PC-3 (cell line): ENCODE measurements at regions of chr2 and their contacts with region 1.

Region 1: GRCh38 chr2:19911799-19912509 is 10.2 kb upstream of the TTC32 start:
- DNase-seq: peak; percentile 99
- ATAC-seq: peak; percentile 97
- H3K4me3 ChIP-seq: 0 out of 2 replicates have a peak overlapping the region, but pooled peaks have one; percentile 6
- H3K27ac ChIP-seq: peak overlapping the region; percentile 71
- H3K4me1 ChIP-seq: peaks cover 32% of the 10 kb centered on the region
- H3K27me3 ChIP-seq: no peaks in the 10 kb centered on the region
- CTCF ChIP-seq: no peak

Region 2: GRCh38 chr2:18731666-18732065 is 1180.3 kb before region 1 on chr2:
- CTCF ChIA-PET with region 1: no interaction called
- POLR2A ChIA-PET with region 1: no interaction called
- intact Hi-C with region 1: no loop called
- DNase-seq: no peak
- ATAC-seq: no peak
- H3K4me3 ChIP-seq: no peak overlapping the region
- H3K27ac ChIP-seq: no peak overlapping the region
- H3K4me1 ChIP-seq: no peaks in the 10 kb centered on the region
- H3K27me3 ChIP-seq: no peaks in the 10 kb centered on the region
- CTCF ChIP-seq: no peak

Region 3: DNA sequence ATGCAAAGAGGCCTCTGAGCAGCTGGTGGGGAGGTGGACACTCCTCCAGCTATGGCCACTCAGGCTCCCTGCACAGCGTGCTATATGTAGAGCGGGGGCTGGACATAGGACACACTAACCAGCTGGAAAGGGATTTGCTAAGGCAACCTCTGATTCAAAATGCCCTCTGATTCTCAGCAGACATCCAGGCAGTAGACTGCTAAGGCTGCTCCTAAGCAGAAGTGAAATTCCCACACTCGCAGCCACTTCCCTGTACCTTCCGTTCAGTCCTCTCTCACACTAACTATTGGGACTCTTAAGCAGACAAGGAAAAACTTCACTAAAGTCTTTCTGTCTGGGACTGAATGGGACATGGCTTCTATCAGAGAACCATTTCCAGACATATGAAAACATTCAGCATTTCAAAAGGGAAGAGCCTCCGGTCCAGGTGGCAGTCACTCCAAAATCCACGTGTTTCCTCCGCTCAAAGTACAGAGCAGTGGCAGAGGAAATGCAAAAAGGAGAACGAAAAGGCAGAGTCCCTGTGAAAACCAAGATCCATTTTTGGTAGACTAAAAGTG is 275.9 kb before region 1 on chr2:
- CTCF ChIA-PET with region 1: no interaction called
- POLR2A ChIA-PET with region 1: no interaction called
- intact Hi-C with region 1: no loop called
- DNase-seq: no peak
- ATAC-seq: no peak
- H3K4me3 ChIP-seq: no peak overlapping the region
- H3K27ac ChIP-seq: no peak overlapping the region
- H3K4me1 ChIP-seq: no peaks in the 10 kb centered on the region
- H3K27me3 ChIP-seq: no peaks in the 10 kb centered on the region
- CTCF ChIP-seq: no peak

Region 4: GRCh38 chr2:19901442-19902215 is 10.3 kb before region 1 on chr2 and contains the start of gene TTC32:
- CTCF ChIA-PET with region 1: no interaction called
- POLR2A ChIA-PET with region 1: interaction called, 22 read pairs
- intact Hi-C with region 1: no loop called
- DNase-seq: peak; percentile 92
- ATAC-seq: peak; percentile 81
- H3K4me3 ChIP-seq: peak within 1 kb of the TSS; percentile 85
- H3K27ac ChIP-seq: peak within 1 kb of the TSS; percentile 89
- H3K4me1 ChIP-seq: peaks cover 30% of the 10 kb centered on the region
- H3K27me3 ChIP-seq: no peaks in the 10 kb centered on the region
- CTCF ChIP-seq: no peak
- total RNA-seq, gene TTC32: 10.0 and 12.1 TPM in 2 replicates

Region 5: GRCh38 chr2:19933351-19933981 is 21.5 kb after region 1 on chr2:
- CTCF ChIA-PET with region 1: interaction called, 4 read pairs
- POLR2A ChIA-PET with region 1: no interaction called
- intact Hi-C with region 1: loop called (anchors 1 kb)
- DNase-seq: peak; percentile 90
- ATAC-seq: peak; percentile 96
- H3K4me3 ChIP-seq: peak overlapping the region; percentile 62
- H3K27ac ChIP-seq: peak overlapping the region; percentile 89
- H3K4me1 ChIP-seq: peaks cover 25% of the 10 kb centered on the region
- H3K27me3 ChIP-seq: no peaks in the 10 kb centered on the region
- CTCF ChIP-seq: no peak

Region 6: DNA sequence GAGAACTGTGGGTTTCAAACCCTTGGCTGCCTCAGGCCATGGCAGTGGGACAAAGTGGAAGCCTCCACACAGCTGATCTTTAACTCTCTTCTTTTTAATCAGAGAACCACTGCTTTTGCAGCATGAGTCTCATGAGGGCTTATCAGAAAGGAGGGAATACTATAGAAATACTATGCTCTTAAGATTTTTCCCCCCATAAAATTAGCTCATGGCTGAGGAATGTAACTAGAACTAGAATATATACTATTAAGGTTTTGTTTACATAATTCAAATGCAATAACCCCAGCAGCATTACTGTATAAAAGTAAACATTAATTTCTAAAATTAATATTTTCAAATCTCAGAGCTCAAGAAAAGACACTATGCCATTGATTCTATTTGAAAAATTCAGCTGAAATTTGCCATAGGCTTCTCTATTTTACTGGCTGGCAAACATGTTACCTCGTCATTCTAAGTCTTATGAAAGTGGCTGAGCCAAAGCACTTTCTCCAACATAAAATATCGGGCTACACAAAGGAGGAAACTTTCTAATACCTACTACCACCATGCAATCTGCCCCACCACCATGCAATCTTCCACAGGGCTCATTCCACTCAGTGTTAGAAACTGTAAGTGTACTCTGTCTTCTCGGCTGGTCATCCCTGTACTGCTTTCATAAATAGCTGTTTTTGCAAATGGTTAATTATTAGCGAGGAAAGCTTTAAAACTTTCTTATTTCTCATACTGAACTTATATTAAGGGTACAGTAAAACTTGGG is 35.4 kb after region 1 on chr2:
- CTCF ChIA-PET with region 1: no interaction called
- POLR2A ChIA-PET with region 1: no interaction called
- intact Hi-C with region 1: loop called (anchors 1 kb)
- DNase-seq: peak; percentile 70
- ATAC-seq: peak; percentile 88
- H3K4me3 ChIP-seq: peak overlapping the region; percentile 14; the same call in 1 of the 2 replicates
- H3K27ac ChIP-seq: peak overlapping the region; percentile 36
- H3K4me1 ChIP-seq: peaks cover 21% of the 10 kb centered on the region
- H3K27me3 ChIP-seq: no peaks in the 10 kb centered on the region
- CTCF ChIP-seq: no peak

Region 7: DNA sequence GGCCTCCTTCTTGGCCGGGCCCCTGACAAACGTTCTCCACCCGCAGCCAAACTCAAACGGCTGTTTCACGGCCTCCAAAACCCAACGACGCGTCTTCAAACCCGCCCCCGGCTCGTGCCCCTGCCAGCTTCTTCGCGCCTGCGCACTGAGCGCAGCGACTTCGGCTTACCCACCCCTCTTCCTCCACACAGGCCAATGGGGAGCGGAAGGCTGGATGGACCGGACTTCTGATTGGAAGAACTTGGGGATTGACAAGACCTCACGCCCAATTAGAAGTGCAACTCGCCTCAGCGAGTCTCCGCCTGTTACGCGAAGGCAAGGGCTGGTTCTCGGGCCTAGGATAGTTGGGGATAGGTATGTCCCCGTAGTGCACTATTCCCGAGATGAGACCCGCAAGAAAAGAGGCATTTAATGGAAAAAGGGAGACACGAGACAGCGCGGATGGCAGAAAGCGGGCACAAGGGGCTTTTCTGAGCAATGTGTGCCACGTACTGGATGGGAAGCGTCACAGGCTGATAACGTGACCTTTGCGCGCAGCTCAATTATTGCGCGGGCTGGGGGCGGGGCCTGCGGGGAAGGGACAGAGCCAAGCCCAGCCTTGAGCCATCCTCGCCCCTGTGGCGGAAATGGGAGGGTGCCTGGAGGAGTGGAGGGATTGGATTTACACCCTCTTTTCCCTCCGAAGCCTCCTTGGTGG is 139.7 kb after region 1 on chr2 and contains the start of gene LAPTM4A:
- CTCF ChIA-PET with region 1: no interaction called
- POLR2A ChIA-PET with region 1: no interaction called
- intact Hi-C with region 1: loop called (anchors 5 kb)
- DNase-seq: peak; percentile 99
- ATAC-seq: peak; percentile 92
- H3K4me3 ChIP-seq: peak within 1 kb of the TSS; percentile 79
- H3K27ac ChIP-seq: peak within 1 kb of the TSS; percentile 91
- H3K4me1 ChIP-seq: peaks cover 33% of the 10 kb centered on the region
- H3K27me3 ChIP-seq: no peaks in the 10 kb centered on the region
- CTCF ChIP-seq: no peak
- total RNA-seq, gene LAPTM4A: 54.5 and 62.7 TPM in 2 replicates